ENCODE measurements at regions of chr7 and their contacts with region 1.

Region 1: GRCh38 chr7:74206589-74207120 is 3.2 kb upstream of the LAT2 start:
- DNase-seq: peak in 34 of 35 experiments; percentile 30 to 85 (median 68)
- ATAC-seq: peak; percentile 66 to 82 (median 72)
- H3K4me3 ChIP-seq: peak overlapping the region in 1 of 2 donors; percentile 18
- H3K4me3 Mint-ChIP-seq: peak overlapping the region; percentile 21 to 56 (median 46)
- H3K27ac ChIP-seq: no peak overlapping the region
- H3K27ac Mint-ChIP-seq: no peak overlapping the region
- H3K4me1 ChIP-seq: peaks cover 0 to 34% of the 10 kb centered on the region in 2 experiments
- H3K4me1 Mint-ChIP-seq: peaks cover 13 to 27% (median 27%) of the 10 kb centered on the region in 3 donors
- H3K27me3 ChIP-seq: peaks cover 0 to 31% of the 10 kb centered on the region in 2 experiments
- H3K27me3 Mint-ChIP-seq: peaks cover 3 to 11% of the 10 kb centered on the region in 2 donors

Region 2: GRCh38 chr7:74068393-74069085 is 138.1 kb before region 1 on chr7:
- CTCF ChIA-PET with region 1: interaction called in 1 of 2 experiments, 11 read pairs
- POLR2A ChIA-PET with region 1: no interaction called
- DNase-seq: no peak
- ATAC-seq: no peak
- H3K4me3 ChIP-seq: no peak overlapping the region
- H3K4me3 Mint-ChIP-seq: no peak overlapping the region
- H3K27ac ChIP-seq: no peak overlapping the region
- H3K27ac Mint-ChIP-seq: no peak overlapping the region
- H3K4me1 ChIP-seq: peaks cover 0 to 2% of the 10 kb centered on the region in 2 experiments
- H3K4me1 Mint-ChIP-seq: no peaks in the 10 kb centered on the region
- H3K27me3 ChIP-seq: peaks cover 0 to 7% of the 10 kb centered on the region in 2 experiments
- H3K27me3 Mint-ChIP-seq: no peaks in the 10 kb centered on the region

Region 3: DNA sequence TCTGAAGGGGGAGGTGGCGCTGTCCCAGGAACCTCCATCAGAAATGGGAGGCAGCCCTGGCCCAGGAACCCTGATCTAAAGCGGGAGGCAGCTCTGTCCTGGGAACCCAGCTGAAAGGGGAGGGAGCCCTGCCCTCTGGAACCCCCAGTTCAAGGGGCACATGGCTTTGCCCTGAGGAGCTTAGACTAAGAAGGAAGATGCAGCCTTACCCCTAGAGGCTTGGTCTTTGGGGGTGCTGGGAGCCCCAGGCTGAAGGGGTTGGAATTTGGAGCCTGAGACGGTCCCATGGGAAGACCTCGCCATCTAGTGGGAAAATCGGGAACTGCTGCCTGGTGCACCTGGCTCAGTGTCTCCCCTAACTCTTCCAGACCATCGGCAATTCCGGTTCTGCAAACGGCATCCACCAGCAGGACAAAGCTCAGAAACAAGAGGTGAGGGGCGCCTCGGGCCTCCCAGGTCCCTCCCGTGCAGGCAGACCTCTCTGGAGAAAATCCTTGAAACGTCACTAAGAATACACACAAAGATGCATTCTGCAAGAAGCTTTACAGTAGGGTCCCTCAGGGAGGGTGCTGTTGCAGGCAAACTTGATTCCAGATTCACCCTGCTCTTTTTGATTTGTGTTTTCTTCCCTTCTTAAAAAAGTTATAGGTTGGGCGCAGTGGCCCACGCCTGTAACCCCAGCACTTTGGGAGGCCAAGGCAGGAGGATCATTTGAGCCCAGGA is 194.6 kb after region 1 on chr7:
- CTCF ChIA-PET with region 1: interaction called, 29 to 31 read pairs
- POLR2A ChIA-PET with region 1: no interaction called
- DNase-seq: peak; percentile 16 to 82 (median 60)
- ATAC-seq: peak; percentile 49 to 67 (median 60)
- H3K4me3 ChIP-seq: no peak overlapping the region
- H3K4me3 Mint-ChIP-seq: no peak overlapping the region
- H3K27ac ChIP-seq: no peak overlapping the region
- H3K27ac Mint-ChIP-seq: no peak overlapping the region
- H3K4me1 ChIP-seq: peaks cover 0 to 2% of the 10 kb centered on the region in 2 experiments
- H3K4me1 Mint-ChIP-seq: peaks cover 0 to 2% (median 0%) of the 10 kb centered on the region in 3 donors
- H3K27me3 ChIP-seq: peaks cover 0 to 13% of the 10 kb centered on the region in 2 experiments
- H3K27me3 Mint-ChIP-seq: no peaks in the 10 kb centered on the region

Measured in T-cell (primary cell).